ENCODE measurements at regions of chr18 and their contacts with region 1.

Region 1: DNA sequence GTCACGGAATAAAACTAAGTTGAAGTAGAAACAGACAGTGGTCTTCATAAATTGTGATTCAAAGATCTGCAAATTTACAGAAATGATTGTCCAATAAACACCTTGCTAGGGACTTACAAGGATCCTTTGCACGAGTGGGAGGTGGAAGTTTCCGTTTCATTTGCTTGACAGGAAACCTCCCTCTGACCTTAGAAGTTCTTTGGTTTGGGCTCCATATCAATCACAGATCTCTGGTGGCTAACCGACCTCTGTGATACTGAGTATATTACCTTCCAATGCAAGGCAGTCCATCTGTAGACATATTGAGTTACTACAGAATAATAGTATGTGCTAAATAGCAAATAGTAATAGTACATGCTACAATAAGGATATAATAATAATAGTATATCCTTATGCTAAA is 33.7 kb upstream of the RNF152 start:
- DNase-seq: peak; percentile 37
- H3K4me3 Mint-ChIP-seq: no peak overlapping the region
- H3K27ac Mint-ChIP-seq: peak overlapping the region; percentile 85
- H3K4me1 Mint-ChIP-seq: peaks cover 41% of the 10 kb centered on the region
- H3K27me3 Mint-ChIP-seq: peaks cover 27% of the 10 kb centered on the region

Region 2: DNA sequence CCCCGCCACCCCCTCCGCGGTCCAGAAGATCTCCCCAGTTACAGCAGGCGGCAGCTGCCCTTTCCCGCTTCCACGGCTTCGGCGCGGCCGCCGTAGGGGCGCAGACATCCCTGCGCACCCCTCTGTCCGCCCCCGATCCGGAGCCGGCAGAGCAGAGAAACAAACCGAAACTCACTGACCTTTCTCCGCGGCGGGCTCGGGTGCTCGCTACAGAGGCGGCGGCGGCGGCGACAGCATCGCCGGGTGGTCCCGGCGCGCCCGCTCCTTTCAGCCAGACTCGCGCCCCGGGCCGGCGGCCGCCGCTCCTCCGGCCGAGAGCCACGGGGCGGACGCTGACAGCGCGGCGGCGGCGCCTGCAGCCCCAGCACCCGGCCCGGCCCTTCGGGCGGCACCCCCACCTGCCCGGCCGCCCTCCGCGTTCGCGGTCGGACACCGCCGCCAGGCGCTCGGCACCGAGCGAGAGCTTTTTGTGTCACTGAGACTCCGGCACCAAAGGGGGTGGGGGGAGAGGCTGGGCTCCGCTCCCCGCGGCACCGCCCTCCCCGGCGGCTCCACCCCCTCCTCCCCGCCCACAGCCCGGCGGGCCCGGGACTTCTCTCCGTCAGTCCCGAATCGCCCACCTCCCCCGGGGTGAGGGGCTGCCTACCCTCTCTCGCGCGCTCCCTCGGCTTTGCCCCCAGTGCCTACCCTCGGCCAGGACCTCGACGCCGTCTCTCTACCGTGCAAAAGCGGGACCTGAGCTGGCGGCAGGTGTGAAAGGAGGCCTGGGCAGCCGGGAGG is 32.4 kb before region 1 on chr18:
- intact Hi-C with region 1: loop called (anchors 1 kb)
- DNase-seq: peak; percentile 54
- H3K4me3 Mint-ChIP-seq: peak overlapping the region; percentile 79
- H3K27ac Mint-ChIP-seq: no peak overlapping the region
- H3K4me1 Mint-ChIP-seq: peaks cover 8% of the 10 kb centered on the region
- H3K27me3 Mint-ChIP-seq: peaks cover 74% of the 10 kb centered on the region

Region 3: GRCh38 chr18:62030091-62030985 is 103.8 kb after region 1 on chr18:
- intact Hi-C with region 1: loop called (anchors 5 kb)
- DNase-seq: no peak
- H3K4me3 Mint-ChIP-seq: no peak overlapping the region
- H3K27ac Mint-ChIP-seq: no peak overlapping the region
- H3K4me1 Mint-ChIP-seq: peaks cover 37% of the 10 kb centered on the region
- H3K27me3 Mint-ChIP-seq: peaks cover 33% of the 10 kb centered on the region

Measured in activated T-helper 2 cell treated with anti-CD3 and anti-CD28 coated beads, Interferon-gamma antibody, Interleukin-2, Interleukin-4, amounts not matched to agents 10 μg/mL and 5 μg/mL and 100 μg/mL, durations not matched to agents 14 hours and 24 hours and 36 hours (primary cell).